Esophagus muscularis mucosa (tissue), 4 donors: ENCODE measurements at regions of chr19 and their contacts with region 1.

Region 1: DNA sequence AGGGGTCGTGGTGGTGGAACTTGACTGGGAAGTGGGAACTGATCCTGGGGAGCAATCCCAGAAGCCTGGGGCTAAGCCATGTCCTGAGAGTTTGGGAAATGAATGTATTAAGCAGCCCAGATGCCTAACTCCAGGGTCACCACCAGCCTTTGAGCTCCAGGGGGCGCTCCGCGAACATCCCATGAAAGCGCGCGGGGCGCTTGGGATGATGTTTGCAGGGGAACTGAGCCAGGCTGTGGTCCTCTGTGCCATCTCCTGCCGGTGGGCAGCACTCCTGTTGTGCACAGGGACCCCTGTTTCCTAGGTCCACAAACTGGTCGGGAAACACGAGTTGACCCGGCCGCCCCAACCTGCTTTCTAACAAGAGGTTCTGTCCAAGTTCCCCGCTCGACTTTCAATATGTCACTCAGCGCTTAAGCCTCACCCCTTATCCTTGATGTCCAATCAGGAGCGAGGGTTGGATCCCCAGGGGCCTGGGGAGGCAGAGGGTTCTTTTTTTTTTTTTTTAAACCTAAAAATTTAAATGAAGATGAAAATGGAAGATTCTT is 14.4 kb downstream of the LEUTX start:
- DNase-seq: peak; percentile 94
- H3K4me3 ChIP-seq: peak overlapping the region; percentile 46 to 61 (median 51)
- H3K27ac ChIP-seq: no peak overlapping the region
- H3K4me1 ChIP-seq: peaks cover 0 to 6% (median 3%) of the 10 kb centered on the region in 4 donors
- H3K27me3 ChIP-seq: peaks cover 0 to 10% (median 0%) of the 10 kb centered on the region in 4 donors
- CTCF ChIP-seq: peak; percentile 87 to 92 (median 87)
- EP300 ChIP-seq: no peak
- POLR2A ChIP-seq: no peak

Region 2: DNA sequence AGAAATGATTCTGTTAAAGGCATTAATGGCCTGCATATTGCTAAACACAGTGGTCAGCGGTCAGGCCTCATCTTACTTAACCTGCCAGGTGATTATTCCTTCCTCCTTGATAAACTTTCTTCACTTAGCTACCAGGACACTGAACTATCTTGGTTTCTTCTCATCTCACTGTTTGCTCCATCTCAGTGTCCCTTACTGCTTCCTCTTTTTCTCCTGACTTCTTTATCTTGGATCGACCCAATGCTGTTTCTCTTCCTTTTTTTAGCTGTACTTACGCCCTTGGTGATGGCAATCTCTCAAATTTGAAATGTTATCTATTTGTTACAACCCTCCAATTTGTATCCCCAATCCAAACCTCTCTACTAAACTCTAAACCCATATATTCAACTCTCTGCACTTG is 47.4 kb before region 1 on chr19:
- intact Hi-C with region 1: no loop called
- DNase-seq: no peak
- H3K4me3 ChIP-seq: no peak overlapping the region
- H3K27ac ChIP-seq: no peak overlapping the region
- H3K4me1 ChIP-seq: no peaks in the 10 kb centered on the region
- H3K27me3 ChIP-seq: peaks cover 0 to 13% (median 0%) of the 10 kb centered on the region in 4 donors
- CTCF ChIP-seq: no peak
- EP300 ChIP-seq: no peak
- POLR2A ChIP-seq: no peak

Region 3: GRCh38 chr19:39846176-39846677 is 53.2 kb after region 1 on chr19 and contains the start of gene FBL:
- intact Hi-C with region 1: loop called (anchors 2 kb)
- DNase-seq: peak; percentile 98
- H3K4me3 ChIP-seq: peak within 1 kb of the TSS; percentile 69 to 81 (median 76)
- H3K27ac ChIP-seq: peak within 1 kb of the TSS; percentile 78 to 88 (median 86)
- H3K4me1 ChIP-seq: peaks cover 22 to 55% (median 50%) of the 10 kb centered on the region in 4 donors
- H3K27me3 ChIP-seq: no peaks in the 10 kb centered on the region
- CTCF ChIP-seq: peak in 1 of 3 experiments; percentile 13
- EP300 ChIP-seq: no peak
- POLR2A ChIP-seq: no peak
- total RNA-seq, gene FBL: 90.6 to 142 (median 96.7) TPM

Region 4: DNA sequence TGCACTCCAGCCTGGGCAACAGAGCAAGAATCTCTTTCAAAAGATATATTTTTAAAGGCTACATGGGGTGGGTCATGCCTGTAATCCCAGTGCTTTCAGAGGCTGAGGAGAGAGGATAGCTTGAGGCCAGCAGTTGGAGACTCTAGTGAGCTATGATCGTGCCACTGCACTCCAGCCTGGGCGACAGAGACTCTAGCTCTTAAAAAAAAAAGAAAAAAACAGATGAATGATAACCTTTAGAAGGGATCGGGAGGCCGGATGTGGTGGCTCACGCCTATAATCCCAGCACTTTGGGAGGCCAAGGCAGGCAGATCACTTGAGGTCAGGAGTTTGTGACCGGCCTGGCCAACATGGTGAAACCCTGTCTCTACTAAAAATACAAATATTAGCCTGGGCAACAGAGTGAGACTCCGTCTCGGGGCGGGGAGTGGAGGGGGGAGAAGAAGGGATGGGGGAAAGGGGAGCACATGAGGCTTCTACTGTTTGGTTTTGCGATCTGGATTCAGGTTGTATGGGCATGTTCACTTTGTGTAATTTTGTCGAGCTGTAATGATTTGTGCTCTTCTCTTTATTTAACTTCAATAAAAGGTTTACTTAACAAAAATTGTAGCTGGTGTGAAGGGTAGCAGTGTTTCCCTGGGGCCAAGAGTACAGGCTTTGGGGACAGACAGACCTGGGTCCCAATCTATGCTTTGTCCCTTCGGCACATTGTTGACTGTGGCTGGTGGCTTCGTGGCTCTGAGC is 176.8 kb after region 1 on chr19:
- intact Hi-C with region 1: loop called (anchors 2 kb)
- DNase-seq: no peak
- H3K4me3 ChIP-seq: peak overlapping the region; percentile 82 to 88 (median 84)
- H3K27ac ChIP-seq: peak overlapping the region; percentile 86 to 91 (median 88)
- H3K4me1 ChIP-seq: peaks cover 17 to 33% (median 28%) of the 10 kb centered on the region in 4 donors
- H3K27me3 ChIP-seq: no peaks in the 10 kb centered on the region
- CTCF ChIP-seq: no peak
- EP300 ChIP-seq: no peak
- POLR2A ChIP-seq: no peak

Region 5: DNA sequence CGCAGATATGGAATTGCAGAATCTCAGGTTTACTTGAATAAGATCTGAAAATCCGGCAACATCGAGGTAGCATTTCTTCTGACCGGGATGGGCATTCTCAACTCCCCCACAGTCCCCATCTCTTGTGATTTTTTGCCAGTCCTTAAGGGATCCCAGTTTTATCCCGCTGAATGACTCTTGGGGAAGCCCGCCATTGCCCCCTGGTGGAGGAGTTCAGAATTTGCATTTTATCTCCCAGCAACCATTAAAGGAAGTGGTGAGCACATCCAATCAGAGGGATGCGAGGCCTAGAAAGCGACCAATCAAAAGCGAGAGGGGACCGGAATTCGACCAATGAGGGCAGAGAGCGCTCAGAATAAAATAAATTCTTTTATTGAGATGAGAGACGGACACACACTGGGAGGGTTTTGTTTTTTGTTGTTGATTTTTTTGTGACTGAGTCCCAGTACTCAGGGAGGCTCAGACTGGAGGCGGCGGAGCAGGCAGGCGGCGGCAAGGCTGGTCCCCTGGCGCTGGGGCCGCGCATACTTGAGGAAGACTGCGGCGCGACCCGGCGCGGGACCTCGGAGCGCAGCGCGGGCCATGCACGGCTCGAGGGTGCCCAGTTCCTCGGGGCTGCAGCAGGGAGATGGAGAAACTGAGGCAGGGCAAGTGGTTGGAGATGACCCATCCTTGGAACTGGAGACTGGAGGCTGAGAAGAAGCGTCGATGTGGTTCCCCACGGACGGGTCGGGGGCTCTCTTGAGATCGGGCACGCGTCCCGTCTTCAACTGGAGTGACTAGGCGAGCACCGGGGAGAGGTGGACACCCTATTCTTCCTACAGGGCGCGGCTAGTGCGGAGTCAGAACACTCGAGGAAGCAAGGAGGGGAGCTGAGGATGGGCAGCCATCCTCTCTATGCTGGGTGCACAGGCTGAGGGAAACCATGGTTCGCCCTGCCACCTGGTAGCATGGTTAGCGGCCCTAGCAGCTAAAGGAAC is 429.1 kb after region 1 on chr19:
- intact Hi-C with region 1: loop called (anchors 5 kb)
- DNase-seq: peak; percentile 96
- H3K4me3 ChIP-seq: no peak overlapping the region
- H3K27ac ChIP-seq: no peak overlapping the region
- H3K4me1 ChIP-seq: peaks cover 17 to 42% (median 39%) of the 10 kb centered on the region in 4 donors
- H3K27me3 ChIP-seq: peaks cover 8 to 95% (median 62%) of the 10 kb centered on the region in 4 donors
- CTCF ChIP-seq: peak; percentile 93 to 97 (median 94)
- EP300 ChIP-seq: no peak
- POLR2A ChIP-seq: no peak